Activated naive CD4-positive, alpha-beta T cell treated with anti-CD3 and anti-CD28 coated beads for 36 hours (primary cell): ENCODE measurements at regions of chr4 and their contacts with region 1.

Region 1: DNA sequence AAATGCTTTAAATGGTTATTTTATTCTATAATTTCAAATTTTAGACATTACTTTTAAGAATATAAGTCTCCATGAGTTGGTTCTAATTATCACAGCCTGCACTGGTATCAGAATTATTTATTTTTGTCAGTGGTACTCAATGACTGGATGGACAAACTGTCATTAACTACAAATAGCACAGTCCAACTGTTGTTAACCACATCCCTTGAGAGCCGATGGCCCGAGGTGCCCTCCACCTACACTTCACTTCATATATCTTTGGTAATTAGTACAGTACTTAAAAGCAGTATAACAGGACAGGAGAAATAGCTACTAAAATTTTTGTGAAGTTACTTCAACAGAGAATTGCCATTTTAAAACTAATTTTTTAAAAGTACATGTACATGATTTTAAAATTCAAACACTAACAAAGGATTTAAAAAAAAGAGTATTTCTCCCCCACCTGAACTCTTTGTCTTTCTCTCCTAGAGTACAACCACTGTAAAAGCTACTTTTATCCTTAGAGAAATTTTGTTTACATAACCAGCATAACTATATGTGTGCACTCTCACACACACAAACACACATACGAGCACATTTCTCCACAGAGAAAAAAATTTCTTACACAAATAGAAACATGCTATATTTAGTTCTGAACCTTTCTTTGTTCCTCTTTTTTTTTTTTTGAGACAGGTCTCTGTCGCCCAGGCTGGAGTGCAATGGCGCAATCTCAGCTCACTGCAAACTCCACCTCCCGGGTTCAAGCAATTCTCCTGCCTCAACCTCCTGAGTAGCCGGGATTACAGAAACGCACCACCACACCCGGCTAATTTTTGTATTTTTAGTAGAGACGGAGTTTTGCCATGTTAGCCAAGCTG is 6.5 kb downstream of the TIFA start:
- DNase-seq: no peak
- H3K4me3 Mint-ChIP-seq: peak overlapping the region; percentile 30
- H3K27ac Mint-ChIP-seq: peak overlapping the region; percentile 63
- H3K4me1 Mint-ChIP-seq: peaks cover 79% of the 10 kb centered on the region
- H3K27me3 Mint-ChIP-seq: no peaks in the 10 kb centered on the region

Region 2: DNA sequence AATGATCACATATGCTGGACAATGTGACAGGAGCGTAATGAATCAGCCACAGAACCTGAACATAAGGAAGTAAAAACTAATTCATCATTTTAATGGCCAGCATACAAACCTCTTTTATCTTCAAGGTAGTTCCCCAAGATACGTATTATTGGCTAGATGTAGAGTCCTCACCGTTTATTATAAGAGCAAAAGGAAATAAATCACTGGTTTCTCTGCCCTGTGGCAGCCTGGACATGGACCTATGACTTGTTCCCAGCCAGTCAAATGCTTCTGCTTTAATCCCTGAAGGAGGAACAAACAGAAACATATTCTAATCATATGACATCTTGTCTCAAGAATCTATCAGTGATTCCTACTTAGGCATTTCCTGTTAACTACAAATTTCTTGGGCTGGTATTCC is 220.8 kb before region 1 on chr4:
- CTCF ChIA-PET with region 1: no interaction called
- intact Hi-C with region 1: no loop called
- DNase-seq: no peak
- H3K4me3 Mint-ChIP-seq: no peak overlapping the region
- H3K27ac Mint-ChIP-seq: no peak overlapping the region
- H3K4me1 Mint-ChIP-seq: peaks cover 3% of the 10 kb centered on the region
- H3K27me3 Mint-ChIP-seq: peaks cover 5% of the 10 kb centered on the region

Region 3: DNA sequence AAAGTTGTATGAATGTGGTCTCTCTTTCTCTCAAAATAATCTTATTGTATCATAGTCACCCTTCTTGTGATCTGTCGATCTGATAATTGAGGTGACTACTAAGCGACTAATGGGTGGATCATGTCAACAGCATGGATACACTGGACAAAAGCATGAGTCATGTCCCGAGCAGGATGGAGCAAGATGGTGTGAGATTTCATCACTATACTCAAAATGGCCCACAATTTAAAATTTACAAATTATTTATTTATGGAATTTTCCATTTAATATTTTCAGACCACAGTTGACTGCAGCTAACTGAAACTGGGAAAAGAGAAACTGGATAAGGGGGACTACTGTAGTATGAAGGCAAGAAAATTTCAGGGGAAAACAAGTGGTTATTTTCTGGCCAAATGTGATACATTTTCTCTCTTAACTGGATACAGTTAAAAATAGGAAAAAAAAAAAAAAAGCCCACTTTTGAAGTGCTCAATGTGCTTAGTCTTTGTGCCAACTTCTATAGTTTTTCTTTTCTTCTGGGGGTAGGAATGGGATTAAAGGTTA is 108.7 kb before region 1 on chr4:
- CTCF ChIA-PET with region 1: no interaction called
- intact Hi-C with region 1: no loop called
- DNase-seq: no peak
- H3K4me3 Mint-ChIP-seq: no peak overlapping the region
- H3K27ac Mint-ChIP-seq: no peak overlapping the region
- H3K4me1 Mint-ChIP-seq: peaks cover 41% of the 10 kb centered on the region
- H3K27me3 Mint-ChIP-seq: no peaks in the 10 kb centered on the region

Region 4: DNA sequence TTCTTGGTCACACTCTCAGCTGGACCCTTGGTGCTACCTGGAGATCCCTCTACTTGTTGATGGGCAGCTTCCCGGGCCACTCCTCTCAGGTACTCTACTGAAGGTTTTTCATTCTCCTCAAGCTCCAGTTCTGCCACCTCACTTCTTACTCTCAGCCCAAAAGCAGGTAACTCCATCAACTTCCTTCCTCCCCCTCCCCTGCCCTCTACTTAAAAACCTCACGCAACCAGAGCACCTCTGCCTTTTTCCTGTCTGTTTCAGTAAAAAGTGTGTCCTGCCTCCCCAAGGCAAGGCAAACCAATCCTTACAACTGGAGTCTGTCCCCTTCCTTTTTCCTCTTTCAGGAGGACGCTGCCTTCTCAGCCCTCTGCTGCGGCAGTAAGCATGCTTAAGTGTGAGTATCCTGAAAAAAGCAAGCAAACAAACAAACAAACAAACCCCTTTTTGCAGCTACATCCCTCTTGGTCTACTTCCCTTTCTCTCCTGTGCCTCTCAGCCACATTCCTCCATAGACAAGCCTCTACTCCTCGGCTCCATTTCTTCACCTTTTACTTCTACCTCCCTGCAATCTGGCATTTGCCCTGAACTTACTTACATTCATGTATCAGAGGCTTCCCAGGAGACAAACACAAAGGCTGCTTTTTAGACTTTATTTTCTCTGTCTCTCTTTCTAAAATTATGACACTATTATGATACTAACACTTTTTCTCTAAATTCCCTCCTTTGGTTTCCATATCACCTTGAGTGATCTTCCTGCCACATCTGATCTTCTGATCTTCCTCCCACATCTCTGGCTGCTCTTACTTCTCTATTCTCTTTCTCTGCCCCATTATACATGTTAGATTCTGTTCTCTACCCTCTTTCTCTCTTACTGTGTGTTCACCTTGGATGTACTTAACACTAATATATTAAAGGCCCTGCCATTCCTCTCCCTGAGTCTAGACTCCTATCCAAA is 23.3 kb after region 1 on chr4:
- CTCF ChIA-PET with region 1: no interaction called
- intact Hi-C with region 1: loop called (anchors 1 kb)
- DNase-seq: peak; percentile 47
- H3K4me3 Mint-ChIP-seq: no peak overlapping the region
- H3K27ac Mint-ChIP-seq: no peak overlapping the region
- H3K4me1 Mint-ChIP-seq: peaks cover 21% of the 10 kb centered on the region
- H3K27me3 Mint-ChIP-seq: no peaks in the 10 kb centered on the region